PC-3 (cell line): ENCODE measurements at regions of chr10 and their contacts with region 1.

Region 1: GRCh38 chr10:12333380-12334185 is 15.8 kb upstream of the CAMK1D start:
- DNase-seq: peak; percentile 86
- ATAC-seq: peak; percentile 99
- H3K4me3 ChIP-seq: peak overlapping the region; percentile 49
- H3K27ac ChIP-seq: peak overlapping the region; percentile 95
- H3K4me1 ChIP-seq: peaks cover 18% of the 10 kb centered on the region
- H3K27me3 ChIP-seq: no peaks in the 10 kb centered on the region
- CTCF ChIP-seq: no peak

Region 2: DNA sequence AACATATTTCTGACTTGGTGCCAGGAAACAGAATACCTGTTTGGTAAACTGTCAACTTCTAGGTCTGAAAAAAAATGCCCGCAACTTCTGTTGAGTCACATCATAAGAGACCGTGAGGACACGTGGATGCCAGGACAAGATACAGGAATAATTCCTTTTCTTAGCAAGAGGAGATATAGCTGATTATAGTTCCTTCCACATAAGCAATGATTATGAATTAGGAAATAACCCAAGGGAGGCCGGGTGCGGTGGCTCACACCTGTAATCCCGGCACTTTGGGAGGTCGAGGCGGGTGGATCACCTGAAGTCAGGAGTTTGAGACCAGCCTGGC is 62.4 kb before region 1 on chr10:
- CTCF ChIA-PET with region 1: no interaction called
- POLR2A ChIA-PET with region 1: interaction called, 23 read pairs
- intact Hi-C with region 1: loop called (anchors 5 kb)
- DNase-seq: no peak
- ATAC-seq: peak; percentile 35
- H3K4me3 ChIP-seq: no peak overlapping the region
- H3K27ac ChIP-seq: no peak overlapping the region
- H3K4me1 ChIP-seq: peaks cover 6% of the 10 kb centered on the region; the same call in 1 of the 2 replicates
- H3K27me3 ChIP-seq: no peaks in the 10 kb centered on the region
- CTCF ChIP-seq: no peak